Testis (tissue), 5 donors: ENCODE measurements at regions of chr22 and their contacts with region 1.

Region 1: GRCh38 chr22:40346178-40347118 is at the start of gene ADSL:
- DNase-seq: peak; percentile 94
- H3K4me3 ChIP-seq: peak within 1 kb of the TSS; percentile 70 to 95
- H3K27ac ChIP-seq: peak within 1 kb of the TSS; percentile 75
- H3K4me1 ChIP-seq: peaks cover 15% of the 10 kb centered on the region
- H3K27me3 ChIP-seq: no peaks in the 10 kb centered on the region
- CTCF ChIP-seq: peak in 1 of 3 experiments; percentile 15
- POLR2A ChIP-seq: no peak
- total RNA-seq, gene ADSL: 78.9 to 102 TPM

Region 2: DNA sequence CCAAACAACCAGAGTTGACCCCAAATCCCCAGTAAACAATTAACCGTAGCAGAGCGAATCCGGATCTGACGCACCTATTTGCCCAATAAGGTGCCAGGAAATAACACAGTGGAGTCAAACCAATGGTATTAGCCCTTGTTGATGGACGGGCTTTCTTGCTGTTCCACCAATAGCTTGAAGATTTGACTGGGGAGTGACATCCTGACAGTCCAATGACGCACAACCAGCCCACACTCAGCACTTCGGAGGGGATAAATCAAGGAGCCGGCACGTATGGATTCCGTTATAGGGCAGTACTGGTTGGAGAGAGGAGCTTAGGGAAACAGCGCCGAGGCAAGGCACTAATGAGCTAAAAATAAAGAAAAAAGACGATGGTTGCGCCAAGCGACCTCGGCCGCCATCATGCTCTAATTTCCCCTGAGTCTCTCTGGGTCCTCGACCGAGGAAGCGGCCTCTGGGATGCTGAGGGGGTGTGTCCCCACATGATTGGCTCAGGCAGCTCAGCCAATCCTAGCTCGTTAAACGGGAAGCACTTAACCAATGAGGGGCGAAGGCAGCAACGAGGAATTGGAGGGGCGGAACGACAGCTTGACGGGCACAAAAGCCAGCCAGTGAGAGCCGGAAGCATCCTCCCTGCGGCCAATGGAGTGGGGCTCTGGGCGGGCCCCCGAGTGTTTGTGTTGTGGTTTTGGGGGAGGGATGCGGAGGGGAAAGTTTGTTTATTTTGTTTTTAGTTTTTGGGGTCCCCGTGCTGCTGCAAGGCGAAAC is 302.2 kb before region 1 on chr22:
- intact Hi-C with region 1: loop called (anchors 10 kb)
- DNase-seq: peak; percentile 98
- H3K4me3 ChIP-seq: peak overlapping the region; percentile 73 to 83
- H3K27ac ChIP-seq: peak overlapping the region; percentile 94 to 98
- H3K4me1 ChIP-seq: peaks cover 53% of the 10 kb centered on the region
- H3K27me3 ChIP-seq: no peaks in the 10 kb centered on the region
- CTCF ChIP-seq: no peak
- POLR2A ChIP-seq: peak; percentile 46

Region 3: GRCh38 chr22:40238425-40239344 is 107.8 kb before region 1 on chr22:
- intact Hi-C with region 1: no loop called
- DNase-seq: no peak
- H3K4me3 ChIP-seq: no peak overlapping the region
- H3K27ac ChIP-seq: no peak overlapping the region
- H3K4me1 ChIP-seq: peaks cover 11% of the 10 kb centered on the region
- H3K27me3 ChIP-seq: no peaks in the 10 kb centered on the region
- CTCF ChIP-seq: no peak
- POLR2A ChIP-seq: no peak